Left ventricle myocardium inferior (tissue), 1 donor: ENCODE measurements at regions of chr9 and their contacts with region 1.

Region 1: DNA sequence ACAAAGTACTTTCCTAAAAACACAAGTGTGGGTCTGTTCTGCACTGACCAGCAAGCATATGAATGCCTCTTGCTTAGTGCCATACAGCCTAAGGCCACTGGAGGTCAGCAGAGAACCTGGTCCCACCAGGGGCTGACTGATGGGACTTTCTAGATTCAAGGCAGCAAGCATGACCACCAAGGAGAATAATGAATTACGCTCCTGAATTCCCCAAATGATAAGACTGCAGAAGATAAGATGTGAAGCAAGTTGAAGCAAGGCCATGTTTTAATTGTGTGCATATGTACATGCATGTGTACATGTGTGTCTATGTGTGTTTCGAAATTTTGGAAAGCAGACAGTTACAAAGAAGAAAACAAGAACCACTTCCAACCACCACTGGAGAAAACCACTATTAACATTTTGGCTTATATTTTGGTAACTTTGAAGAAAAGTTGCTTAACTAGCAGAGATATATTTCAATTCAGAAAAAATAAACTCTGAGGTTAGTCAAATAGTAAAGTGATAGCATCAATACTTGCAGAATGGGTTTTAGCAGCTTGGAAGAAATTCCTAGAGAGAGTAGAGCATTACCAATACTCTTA is 70.5 kb downstream of the ERP44 start:
- DNase-seq: peak; percentile 57
- H3K4me3 ChIP-seq: no peak overlapping the region
- H3K27ac ChIP-seq: no peak overlapping the region
- H3K4me1 ChIP-seq: no peaks in the 10 kb centered on the region
- H3K27me3 ChIP-seq: no peaks in the 10 kb centered on the region
- CTCF ChIP-seq: peak; percentile 98

Region 2: DNA sequence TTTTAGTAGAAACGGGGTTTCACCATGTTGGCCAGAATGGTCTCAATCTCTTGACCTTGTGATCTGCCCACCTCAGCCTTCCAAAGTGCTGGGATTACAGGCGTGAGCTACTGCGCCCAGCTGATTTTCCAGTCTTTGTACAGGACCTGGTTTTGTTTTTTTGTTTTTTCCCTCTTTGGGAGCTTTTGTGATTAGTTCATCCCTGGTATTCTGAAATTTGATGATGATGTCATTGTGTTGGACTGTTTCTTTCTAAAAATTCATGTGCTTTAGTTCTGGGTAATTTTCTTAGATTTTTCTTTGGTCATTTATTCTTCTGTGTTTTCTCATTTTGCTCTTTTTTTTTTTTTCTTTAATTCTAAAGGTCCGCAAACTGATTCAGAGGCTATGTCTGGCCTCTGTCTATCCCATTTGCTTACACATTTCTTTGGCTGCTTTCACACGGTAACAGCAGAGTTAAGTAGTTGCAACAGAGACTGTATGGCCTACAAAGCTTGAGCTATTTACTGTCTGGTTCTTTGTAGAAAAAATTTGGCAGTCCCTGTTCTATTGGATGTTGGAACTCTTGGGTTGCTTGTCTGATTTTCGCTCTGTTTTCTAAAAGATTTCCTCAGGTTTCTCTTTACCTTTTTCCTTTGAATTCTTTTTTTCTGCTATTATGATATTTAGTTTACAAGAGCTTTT is 97.0 kb before region 1 on chr9:
- intact Hi-C with region 1: no loop called
- DNase-seq: no peak
- H3K4me3 ChIP-seq: no peak overlapping the region
- H3K27ac ChIP-seq: no peak overlapping the region
- H3K4me1 ChIP-seq: no peaks in the 10 kb centered on the region
- H3K27me3 ChIP-seq: no peaks in the 10 kb centered on the region
- CTCF ChIP-seq: no peak

Region 3: DNA sequence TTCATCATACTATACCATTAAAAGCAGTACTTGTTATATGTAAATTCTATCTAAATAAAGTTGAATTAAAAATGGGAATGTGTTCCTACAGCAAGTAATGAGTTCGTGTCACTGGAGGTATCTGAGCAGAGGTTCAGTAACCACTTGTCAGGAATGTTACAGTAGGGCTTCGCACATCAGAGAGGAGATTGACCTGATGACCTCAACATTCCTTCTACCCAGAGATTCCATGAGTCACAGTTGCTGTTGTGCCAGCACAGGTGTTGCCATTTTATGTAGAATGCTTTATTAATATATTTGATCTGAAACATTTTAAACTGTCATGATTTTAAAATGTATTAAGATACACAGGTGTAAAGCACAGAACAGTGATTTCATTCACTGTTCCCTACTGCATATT is 61.6 kb before region 1 on chr9:
- intact Hi-C with region 1: no loop called
- DNase-seq: no peak
- H3K4me3 ChIP-seq: no peak overlapping the region
- H3K27ac ChIP-seq: no peak overlapping the region
- H3K4me1 ChIP-seq: no peaks in the 10 kb centered on the region
- H3K27me3 ChIP-seq: no peaks in the 10 kb centered on the region
- CTCF ChIP-seq: no peak

Region 4: DNA sequence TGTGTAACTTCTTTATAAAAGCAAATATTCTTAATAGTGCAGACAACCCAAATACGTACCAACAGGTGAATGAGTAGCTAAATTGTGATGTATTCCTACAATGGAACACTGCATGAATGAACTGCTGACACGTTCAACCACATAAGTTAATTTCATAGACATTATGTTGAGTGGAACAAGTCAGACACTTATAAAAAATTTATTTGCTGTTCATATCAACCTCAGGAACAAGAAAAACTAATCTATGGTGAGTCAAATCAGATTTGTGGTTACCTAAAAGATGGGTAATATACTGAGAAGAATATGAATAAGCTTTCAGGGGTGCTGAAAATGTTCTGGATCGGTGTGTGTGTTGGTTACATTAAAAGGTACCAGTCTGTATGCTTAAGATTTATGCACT is 106.4 kb after region 1 on chr9:
- intact Hi-C with region 1: no loop called
- DNase-seq: no peak
- H3K4me3 ChIP-seq: no peak overlapping the region
- H3K27ac ChIP-seq: no peak overlapping the region
- H3K4me1 ChIP-seq: no peaks in the 10 kb centered on the region
- H3K27me3 ChIP-seq: no peaks in the 10 kb centered on the region
- CTCF ChIP-seq: no peak

Region 5: DNA sequence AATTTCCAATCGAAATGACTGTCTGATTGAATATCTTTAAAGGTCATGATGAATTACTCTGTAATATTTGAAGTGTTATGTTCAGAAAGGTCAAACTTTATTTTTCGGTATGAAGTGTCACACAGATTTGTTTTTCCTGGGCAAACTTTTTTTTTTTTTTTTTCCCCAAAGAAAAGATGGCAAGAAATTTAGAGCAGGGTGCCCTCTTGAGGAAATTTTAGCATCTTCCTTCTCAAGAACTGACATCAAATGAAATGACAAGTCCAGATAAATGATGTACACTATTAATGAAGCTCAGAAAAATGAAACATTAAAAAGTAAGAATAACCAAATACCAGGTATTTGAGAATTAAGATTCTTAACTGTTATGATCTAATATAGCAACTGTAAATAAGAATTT is 194.4 kb after region 1 on chr9:
- intact Hi-C with region 1: loop called (anchors 10 kb)
- DNase-seq: no peak
- H3K4me3 ChIP-seq: no peak overlapping the region
- H3K27ac ChIP-seq: no peak overlapping the region
- H3K4me1 ChIP-seq: peaks cover 13% of the 10 kb centered on the region
- H3K27me3 ChIP-seq: no peaks in the 10 kb centered on the region
- CTCF ChIP-seq: peak; percentile 50

Region 6: GRCh38 chr9:100322954-100323536 is 294.8 kb after region 1 on chr9:
- intact Hi-C with region 1: loop called (anchors 5 kb)
- DNase-seq: no peak
- H3K4me3 ChIP-seq: no peak overlapping the region
- H3K27ac ChIP-seq: no peak overlapping the region
- H3K4me1 ChIP-seq: no peaks in the 10 kb centered on the region
- H3K27me3 ChIP-seq: no peaks in the 10 kb centered on the region
- CTCF ChIP-seq: peak; percentile 72